ENCODE measurements at regions of chr13 and their contacts with region 1.

Region 1: DNA sequence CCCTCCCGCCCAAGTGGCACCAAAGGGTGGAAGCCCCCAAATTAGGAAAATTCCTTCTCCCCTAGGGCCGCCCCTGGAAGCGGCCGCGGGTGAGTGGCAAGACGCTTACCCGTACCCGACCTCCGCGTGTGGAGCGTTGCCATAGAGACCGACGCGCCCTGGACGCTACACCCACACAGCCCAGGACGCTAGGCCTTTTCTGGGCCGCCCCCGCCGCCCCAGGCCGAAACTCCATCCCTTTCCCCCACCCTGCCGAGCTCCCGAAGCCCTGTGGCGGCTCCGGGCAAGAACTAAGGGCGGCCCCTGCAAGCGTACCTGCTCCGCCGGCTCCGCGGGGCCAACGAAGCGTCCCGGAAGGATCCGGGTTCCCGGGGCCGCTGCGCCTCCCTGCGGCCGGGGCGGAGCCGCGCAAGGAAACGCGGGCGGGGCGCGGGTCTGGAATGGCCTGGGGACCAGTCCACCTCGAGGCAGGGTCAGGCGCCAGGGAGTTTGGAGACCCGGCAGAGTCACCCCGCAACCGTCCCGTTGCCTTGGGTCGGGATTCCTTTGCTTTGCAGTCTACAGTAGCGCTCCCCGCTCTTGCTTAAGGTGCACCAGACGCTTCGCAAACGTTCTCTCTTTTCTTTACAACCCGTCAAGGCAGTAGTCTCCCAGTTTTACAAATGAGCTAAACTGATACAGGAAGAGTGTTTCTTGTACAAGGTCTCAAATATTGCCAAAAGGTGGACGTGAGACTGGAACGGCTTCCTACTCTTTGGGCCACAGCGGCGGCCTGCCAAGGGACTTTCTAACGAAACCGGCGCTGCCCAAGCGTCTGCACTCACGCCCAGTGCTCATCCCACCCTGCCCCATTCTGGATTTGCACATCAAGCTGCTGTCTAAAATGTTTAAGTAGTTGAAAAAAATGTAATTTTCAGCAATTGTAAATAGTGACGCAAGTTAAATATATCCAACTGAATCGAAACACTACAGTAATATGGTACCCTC is at the start of gene NEK5:
- DNase-seq: peak; percentile 45 to 77
- H3K4me3 ChIP-seq: peak within 1 kb of the TSS; percentile 47
- H3K4me1 ChIP-seq: peaks cover 3% of the 10 kb centered on the region; the same call in 1 of the 2 replicates
- H3K27me3 ChIP-seq: peaks cover 26% of the 10 kb centered on the region; the same call in 1 of the 2 replicates

Region 2: DNA sequence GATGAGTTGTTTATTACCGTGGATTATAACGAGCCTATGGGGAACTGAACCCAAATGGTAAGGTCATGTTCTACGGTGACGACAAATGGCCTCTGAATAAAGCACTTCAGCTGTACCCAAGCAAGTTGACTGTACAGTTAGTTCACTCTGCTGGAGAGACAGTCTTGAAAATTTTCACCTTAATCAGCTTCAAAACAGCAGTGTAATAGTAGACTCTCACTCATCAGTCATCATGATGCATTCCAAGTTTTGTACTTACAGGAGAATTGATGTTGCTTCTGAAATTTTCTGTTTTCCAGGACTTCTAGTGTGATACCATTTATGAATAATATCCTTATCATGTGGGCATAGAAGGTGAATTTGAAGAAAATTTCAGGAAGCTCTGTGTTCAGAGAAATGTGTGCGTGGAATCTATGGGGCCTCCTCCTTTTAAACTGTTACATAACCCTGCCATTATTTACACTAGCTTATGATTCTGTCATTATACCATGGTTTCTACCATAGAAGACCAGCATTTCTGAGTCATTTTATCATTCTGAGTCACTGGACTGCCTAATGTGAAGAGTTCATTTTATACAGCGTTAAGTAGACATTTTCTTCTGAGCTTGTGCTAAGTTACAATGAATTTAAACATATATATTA is 447.8 kb before region 1 on chr13:
- in situ Hi-C with region 1: no loop called
- DNase-seq: no peak
- H3K4me3 ChIP-seq: no peak overlapping the region
- H3K4me1 ChIP-seq: no peaks in the 10 kb centered on the region
- H3K27me3 ChIP-seq: no peaks in the 10 kb centered on the region

Region 3: DNA sequence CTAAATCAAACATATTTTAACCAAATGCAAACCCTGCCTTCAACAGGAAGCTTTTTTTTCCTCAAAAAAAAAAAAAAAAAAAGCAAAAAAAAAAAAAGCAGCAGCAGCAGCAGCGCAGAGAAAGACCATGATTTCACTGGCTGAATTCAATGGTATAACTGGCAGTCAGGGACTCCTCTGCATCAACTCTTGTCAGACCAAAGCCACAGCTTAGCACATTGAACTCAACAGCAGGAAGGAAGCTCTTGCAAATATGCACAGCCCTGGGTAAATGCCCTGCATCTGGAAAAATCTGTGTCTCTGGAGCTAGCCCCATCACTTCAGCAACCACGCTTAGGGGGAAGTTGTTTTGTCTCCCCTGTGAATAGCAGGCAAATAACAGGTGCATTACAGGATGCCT is 307.4 kb before region 1 on chr13:
- in situ Hi-C with region 1: loop called (anchors 5 kb)
- DNase-seq: no peak
- H3K4me3 ChIP-seq: no peak overlapping the region
- H3K4me1 ChIP-seq: peaks cover 3% of the 10 kb centered on the region; the same call in 1 of the 2 replicates
- H3K27me3 ChIP-seq: peaks cover 18% of the 10 kb centered on the region

Region 4: GRCh38 chr13:52001120-52001731 is 127.8 kb before region 1 on chr13:
- in situ Hi-C with region 1: loop called (anchors 10 kb)
- DNase-seq: peak in 1 of 2 experiments; percentile 68
- H3K4me3 ChIP-seq: no peak overlapping the region
- H3K4me1 ChIP-seq: no peaks in the 10 kb centered on the region
- H3K27me3 ChIP-seq: no peaks in the 10 kb centered on the region

Region 5: GRCh38 chr13:52651897-52652195 is 522.8 kb after region 1 on chr13:
- in situ Hi-C with region 1: no loop called
- DNase-seq: no peak
- H3K4me3 ChIP-seq: peak overlapping the region; percentile 72
- H3K4me1 ChIP-seq: peaks cover 10% of the 10 kb centered on the region
- H3K27me3 ChIP-seq: no peaks in the 10 kb centered on the region